Activated naive CD4-positive, alpha-beta T cell treated with anti-CD3 and anti-CD28 coated beads for 36 hours (primary cell): ENCODE measurements at regions of chr18 and their contacts with region 1.

Region 1: GRCh38 chr18:839224-840022 is 27.4 kb upstream of the YES1 start:
- DNase-seq: peak; percentile 93
- H3K4me3 Mint-ChIP-seq: no peak overlapping the region
- H3K27ac Mint-ChIP-seq: no peak overlapping the region
- H3K4me1 Mint-ChIP-seq: peaks cover 8% of the 10 kb centered on the region
- H3K27me3 Mint-ChIP-seq: no peaks in the 10 kb centered on the region

Region 2: DNA sequence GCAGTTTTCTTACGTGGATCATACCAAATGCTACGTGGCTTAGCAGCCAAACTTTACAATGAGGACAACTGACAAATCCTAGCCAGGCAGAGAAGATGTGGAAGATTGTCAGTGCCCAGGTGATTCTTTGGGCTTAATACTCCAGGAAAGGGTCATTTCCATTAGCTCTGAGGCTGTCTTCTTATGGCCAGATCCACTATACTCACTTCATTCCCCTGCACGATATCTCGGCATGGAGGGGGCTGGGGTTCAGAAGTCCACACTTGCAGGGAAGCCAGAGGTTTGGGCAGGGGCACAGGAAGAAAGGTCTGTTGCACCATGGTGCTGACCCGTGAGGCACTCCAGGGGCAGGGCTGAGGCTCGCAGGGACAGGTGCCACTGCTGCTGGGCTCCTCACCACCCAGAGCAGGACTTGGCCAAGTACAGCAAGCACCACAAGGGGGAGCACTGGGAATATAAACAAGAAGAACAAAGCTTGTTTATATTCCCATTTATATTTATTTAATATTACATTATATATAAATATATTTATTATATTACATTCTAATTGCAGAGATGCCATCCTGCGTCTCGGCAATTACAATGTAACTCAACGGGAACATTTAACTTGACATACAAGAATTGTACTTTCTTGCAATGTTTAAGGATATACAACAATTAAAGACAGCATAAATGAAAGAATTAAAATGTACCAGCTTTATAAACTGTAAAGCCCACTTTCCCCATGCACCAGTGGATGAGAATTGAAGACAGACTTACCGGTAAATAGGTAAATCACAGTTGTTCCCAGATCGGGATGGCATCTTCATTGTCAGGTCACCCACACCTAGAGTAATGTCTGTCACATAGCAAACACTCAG is 215.4 kb before region 1 on chr18:
- CTCF ChIA-PET with region 1: interaction called, 26 read pairs
- intact Hi-C with region 1: loop called (anchors 1 kb)
- DNase-seq: peak; percentile 81
- H3K4me3 Mint-ChIP-seq: no peak overlapping the region
- H3K27ac Mint-ChIP-seq: no peak overlapping the region
- H3K4me1 Mint-ChIP-seq: no peaks in the 10 kb centered on the region
- H3K27me3 Mint-ChIP-seq: no peaks in the 10 kb centered on the region

Region 3: DNA sequence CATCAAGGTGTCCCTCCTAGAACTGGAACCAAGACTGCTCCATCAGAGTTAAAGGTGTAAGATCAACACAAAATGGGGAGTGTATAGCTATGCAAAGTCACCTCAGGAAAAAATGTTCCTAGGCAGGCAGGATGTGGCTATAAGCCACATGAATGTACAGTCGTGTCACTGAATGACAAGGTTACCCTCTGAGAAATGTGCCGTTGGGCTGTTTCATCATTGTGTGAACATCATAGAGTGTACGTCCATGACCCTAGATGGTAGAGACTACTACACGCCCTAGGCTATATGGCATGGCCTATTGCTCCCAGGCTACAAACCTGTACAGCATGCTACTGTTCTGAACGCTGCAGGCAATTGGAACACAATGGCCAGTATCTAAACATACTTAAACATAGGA is 157.4 kb before region 1 on chr18:
- CTCF ChIA-PET with region 1: interaction called, 10 read pairs
- intact Hi-C with region 1: no loop called
- DNase-seq: peak; percentile 77
- H3K4me3 Mint-ChIP-seq: no peak overlapping the region
- H3K27ac Mint-ChIP-seq: peak overlapping the region; percentile 73
- H3K4me1 Mint-ChIP-seq: peaks cover 17% of the 10 kb centered on the region
- H3K27me3 Mint-ChIP-seq: no peaks in the 10 kb centered on the region

Region 4: DNA sequence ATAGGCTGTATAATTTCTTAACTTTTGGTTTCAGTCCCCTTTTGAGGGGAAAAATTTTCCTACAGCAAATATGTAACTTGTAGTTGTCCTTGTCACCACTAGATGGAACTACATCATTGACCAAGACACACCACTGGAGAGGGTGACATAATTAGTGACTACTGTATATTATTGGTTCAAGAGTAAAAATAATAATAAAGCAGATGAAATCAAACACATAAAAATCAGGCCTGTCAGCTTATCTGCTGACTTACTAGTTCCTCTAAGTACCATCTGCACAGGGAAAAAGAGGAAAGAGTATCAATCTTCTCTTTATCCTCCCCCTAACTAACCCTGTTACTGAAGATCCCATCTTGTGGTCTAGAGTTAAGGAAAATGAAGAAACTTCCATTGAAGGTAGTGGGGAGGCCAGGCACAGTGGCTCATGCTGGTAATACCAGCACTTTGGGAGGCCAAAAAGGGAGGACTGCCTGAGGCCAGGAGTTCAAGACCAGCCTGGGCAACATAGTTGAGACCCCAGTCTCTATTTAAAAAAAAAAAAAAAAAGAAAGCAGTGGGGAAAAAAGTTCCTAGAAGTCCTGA is 97.4 kb before region 1 on chr18:
- CTCF ChIA-PET with region 1: interaction called, 112 read pairs
- intact Hi-C with region 1: loop called (anchors 1 kb)
- DNase-seq: no peak
- H3K4me3 Mint-ChIP-seq: no peak overlapping the region
- H3K27ac Mint-ChIP-seq: no peak overlapping the region
- H3K4me1 Mint-ChIP-seq: no peaks in the 10 kb centered on the region
- H3K27me3 Mint-ChIP-seq: no peaks in the 10 kb centered on the region

Region 5: GRCh38 chr18:1014951-1015624 is 175.7 kb after region 1 on chr18:
- CTCF ChIA-PET with region 1: no interaction called
- intact Hi-C with region 1: no loop called
- DNase-seq: no peak
- H3K4me3 Mint-ChIP-seq: no peak overlapping the region
- H3K27ac Mint-ChIP-seq: no peak overlapping the region
- H3K4me1 Mint-ChIP-seq: no peaks in the 10 kb centered on the region
- H3K27me3 Mint-ChIP-seq: peaks cover 2% of the 10 kb centered on the region

Region 6: GRCh38 chr18:1438458-1438910 is 599.1 kb after region 1 on chr18:
- CTCF ChIA-PET with region 1: no interaction called
- intact Hi-C with region 1: no loop called
- DNase-seq: no peak
- H3K4me3 Mint-ChIP-seq: no peak overlapping the region
- H3K27ac Mint-ChIP-seq: no peak overlapping the region
- H3K4me1 Mint-ChIP-seq: no peaks in the 10 kb centered on the region
- H3K27me3 Mint-ChIP-seq: no peaks in the 10 kb centered on the region